ENCODE measurements at regions of chr19 and their contacts with region 1.

Region 1: DNA sequence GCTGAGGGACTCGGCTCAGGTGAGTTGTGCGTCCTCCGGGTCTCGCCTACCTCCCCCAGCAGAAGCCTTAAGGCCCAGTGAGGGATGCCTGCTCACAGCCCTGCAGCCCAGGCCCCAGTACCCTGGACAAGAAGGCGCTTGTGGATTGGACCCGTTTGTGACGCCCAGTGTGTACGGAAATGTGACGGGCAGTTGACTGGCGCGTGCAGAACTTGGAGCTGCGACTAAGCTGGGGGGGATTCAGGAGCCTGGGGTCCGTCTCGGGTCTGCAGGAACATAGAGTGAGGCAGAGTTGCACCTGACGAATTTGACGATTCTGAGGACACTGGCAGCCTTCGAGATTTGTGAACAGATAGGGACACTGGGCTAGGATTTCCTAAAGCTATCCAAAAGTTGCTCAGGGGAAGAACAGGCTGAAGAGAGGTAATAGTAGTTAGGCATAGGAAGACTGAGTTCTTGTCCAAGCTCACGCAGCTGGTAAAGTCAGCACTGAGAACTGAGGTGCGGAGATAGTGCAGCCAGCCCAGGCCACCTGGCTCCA is 519 bp downstream of the ZNF551 start:
- DNase-seq: no peak
- ATAC-seq: no peak
- H3K4me3 Mint-ChIP-seq: peak overlapping the region; percentile 98
- H3K27ac Mint-ChIP-seq: peak overlapping the region; percentile 90
- H3K4me1 Mint-ChIP-seq: peaks cover 39% of the 10 kb centered on the region
- H3K27me3 Mint-ChIP-seq: peaks cover 8% of the 10 kb centered on the region
- CTCF ChIP-seq: no peak

Region 2: GRCh38 chr19:57613941-57614743 is 68.2 kb before region 1 on chr19 and contains the start of gene ZNF134:
- CTCF ChIA-PET with region 1: no interaction called
- POLR2A ChIA-PET with region 1: interaction called, 11 read pairs
- intact Hi-C with region 1: loop called (anchors 1 kb)
- DNase-seq: peak; percentile 82
- ATAC-seq: peak; percentile 99
- H3K4me3 Mint-ChIP-seq: peak within 1 kb of the TSS; percentile 93
- H3K27ac Mint-ChIP-seq: peak within 1 kb of the TSS; percentile 78
- H3K4me1 Mint-ChIP-seq: peaks cover 39% of the 10 kb centered on the region
- H3K27me3 Mint-ChIP-seq: no peaks in the 10 kb centered on the region
- CTCF ChIP-seq: no peak
- total RNA-seq, gene ZNF134: 32.3 and 38.4 TPM in 2 replicates

Region 3: DNA sequence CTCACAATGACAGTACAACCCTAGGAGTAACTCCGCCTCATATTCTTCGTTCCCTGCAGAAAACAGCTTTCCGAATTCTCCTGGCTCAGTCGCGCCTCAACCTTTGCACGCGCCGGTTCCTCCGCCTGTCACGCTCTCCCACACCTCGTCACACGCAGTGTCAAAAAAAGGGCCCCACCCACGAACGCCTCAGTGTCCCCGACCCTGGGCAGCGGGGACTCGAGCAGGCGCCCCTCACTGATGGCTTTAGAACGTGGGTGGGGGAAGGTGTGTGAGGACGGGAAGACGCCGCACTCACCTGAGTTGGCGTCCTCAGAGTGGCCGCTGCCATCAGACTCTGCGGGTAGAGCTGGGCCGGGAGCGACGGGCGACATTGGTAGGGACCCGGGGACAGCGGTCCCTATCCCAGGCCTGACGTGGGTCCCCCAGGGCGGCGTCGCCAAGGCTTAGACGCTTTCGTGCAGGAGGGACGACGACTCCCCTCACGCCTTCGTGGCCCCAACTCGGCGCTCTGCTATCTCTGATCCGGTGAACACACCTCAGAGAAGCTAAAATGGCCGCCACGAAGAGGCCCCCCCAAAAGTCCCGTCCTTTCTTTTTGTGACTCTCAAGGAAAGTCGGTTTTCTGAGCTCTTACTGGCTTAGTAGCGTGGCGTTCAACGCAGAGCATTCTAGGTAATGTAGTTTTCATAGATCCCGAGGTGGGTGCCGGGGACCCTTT is 26.5 kb after region 1 on chr19 and contains the start of gene ZNF154:
- CTCF ChIA-PET with region 1: interaction called, 3 read pairs
- POLR2A ChIA-PET with region 1: interaction called, 25 read pairs
- intact Hi-C with region 1: loop called (anchors 1 kb)
- DNase-seq: peak; percentile 56
- ATAC-seq: peak; percentile 93
- H3K4me3 Mint-ChIP-seq: peak within 1 kb of the TSS; percentile 93
- H3K27ac Mint-ChIP-seq: peak within 1 kb of the TSS; percentile 93
- H3K4me1 Mint-ChIP-seq: peaks cover 46% of the 10 kb centered on the region
- H3K27me3 Mint-ChIP-seq: no peaks in the 10 kb centered on the region
- CTCF ChIP-seq: no peak
- total RNA-seq, gene ZNF154: 23.2 and 27.9 TPM in 2 replicates

Region 4: DNA sequence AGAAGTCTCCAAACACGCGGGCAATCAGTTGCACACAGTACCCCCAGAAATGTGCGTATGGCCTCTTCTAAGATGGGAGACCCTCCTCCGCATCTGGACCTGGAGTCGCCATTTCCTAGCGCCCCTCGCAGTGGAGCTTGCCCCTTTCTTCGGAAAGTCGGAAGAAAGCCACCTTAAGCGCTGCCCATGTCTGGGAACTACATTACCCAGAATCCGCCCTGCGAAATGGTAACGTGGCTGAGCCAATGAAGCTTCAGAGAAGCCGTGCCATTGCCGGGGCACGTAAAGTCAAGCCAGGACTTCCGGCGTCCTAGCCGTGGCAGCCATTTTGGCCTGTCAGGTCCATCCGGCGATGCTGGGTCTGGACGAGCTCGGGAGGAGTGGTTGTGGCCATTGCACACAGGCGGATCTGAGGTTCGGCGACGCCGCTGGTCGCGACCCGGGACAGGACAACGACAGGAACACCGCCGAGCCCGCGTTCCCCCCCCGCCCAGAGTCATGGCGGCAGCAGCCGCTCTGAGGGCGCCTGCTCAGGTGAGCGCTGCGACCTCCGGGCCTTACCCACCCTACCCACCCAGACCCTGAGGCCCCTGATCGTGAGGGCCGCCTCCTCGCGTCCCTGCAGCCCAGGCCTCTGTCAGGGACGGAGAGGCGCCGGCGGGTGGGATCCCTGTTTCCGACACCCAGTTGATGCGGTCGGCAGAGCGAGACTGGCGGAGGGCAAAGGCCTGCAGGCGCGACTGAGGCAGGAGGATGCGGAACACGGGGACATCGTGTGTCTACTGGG is 87.2 kb after region 1 on chr19 and contains the start of gene ZNF586:
- CTCF ChIA-PET with region 1: no interaction called
- POLR2A ChIA-PET with region 1: interaction called, 3 read pairs
- intact Hi-C with region 1: loop called (anchors 1 kb)
- DNase-seq: peak; percentile 76
- ATAC-seq: peak; percentile 98
- H3K4me3 Mint-ChIP-seq: peak within 1 kb of the TSS; percentile 95
- H3K27ac Mint-ChIP-seq: peak within 1 kb of the TSS; percentile 86
- H3K4me1 Mint-ChIP-seq: peaks cover 54% of the 10 kb centered on the region
- H3K27me3 Mint-ChIP-seq: no peaks in the 10 kb centered on the region
- CTCF ChIP-seq: no peak
- total RNA-seq, gene ZNF586: 29.4 and 33.7 TPM in 2 replicates

Region 5: DNA sequence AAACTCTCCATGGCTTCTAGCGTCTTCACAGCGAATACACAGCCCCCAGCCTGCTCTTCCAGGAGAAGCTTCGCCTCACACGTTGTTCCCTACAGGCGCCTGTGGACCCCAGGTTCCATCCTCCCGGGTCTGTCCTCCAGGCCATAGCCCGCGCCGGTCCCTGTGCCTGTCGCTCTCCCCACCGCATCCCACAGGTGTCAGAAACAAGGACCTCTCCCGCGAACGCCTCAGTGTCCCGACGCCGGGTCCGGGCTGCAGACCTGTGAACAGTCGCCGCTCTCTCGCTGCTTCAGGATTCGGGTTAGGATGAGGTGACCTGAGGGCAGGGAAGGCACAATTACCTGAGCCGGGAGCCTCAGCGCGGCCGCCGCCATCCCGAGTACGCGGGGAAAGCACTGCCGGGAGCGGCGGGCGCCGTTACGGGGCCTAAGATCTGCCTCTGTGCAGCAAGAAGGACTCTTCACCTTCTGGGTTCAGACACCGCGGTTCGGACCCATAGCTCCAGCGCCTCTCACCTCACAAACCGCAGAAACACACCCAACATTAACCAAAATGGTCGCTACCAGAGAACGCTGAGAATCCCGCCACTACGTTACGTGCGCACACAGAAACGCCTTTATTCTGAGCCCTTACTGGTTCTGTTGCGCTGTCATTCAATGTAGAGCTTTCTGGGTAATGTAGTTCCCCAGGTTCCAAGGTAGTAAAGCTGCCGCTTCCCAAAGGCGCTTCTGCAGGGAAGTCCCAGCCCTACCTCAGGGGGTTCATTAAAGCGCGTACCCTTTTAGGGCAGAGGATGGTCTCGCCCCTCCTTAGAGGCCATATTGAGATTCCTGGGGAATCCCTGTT is 252.7 kb after region 1 on chr19 and contains the start of gene ZNF418:
- CTCF ChIA-PET with region 1: no interaction called
- POLR2A ChIA-PET with region 1: no interaction called
- intact Hi-C with region 1: no loop called
- DNase-seq: peak; percentile 40
- ATAC-seq: peak; percentile 99
- H3K4me3 Mint-ChIP-seq: peak within 1 kb of the TSS; percentile 96
- H3K27ac Mint-ChIP-seq: peak within 1 kb of the TSS; percentile 86
- H3K4me1 Mint-ChIP-seq: peaks cover 16% of the 10 kb centered on the region
- H3K27me3 Mint-ChIP-seq: no peaks in the 10 kb centered on the region
- CTCF ChIP-seq: no peak
- total RNA-seq, gene ZNF418: 21.3 and 26.5 TPM in 2 replicates

Measured in activated B cell treated with CpG ODN at 0.5 μM for 24 hours (primary cell).